ENCODE measurements at regions of chr4 and their contacts with region 1.

Region 1: DNA sequence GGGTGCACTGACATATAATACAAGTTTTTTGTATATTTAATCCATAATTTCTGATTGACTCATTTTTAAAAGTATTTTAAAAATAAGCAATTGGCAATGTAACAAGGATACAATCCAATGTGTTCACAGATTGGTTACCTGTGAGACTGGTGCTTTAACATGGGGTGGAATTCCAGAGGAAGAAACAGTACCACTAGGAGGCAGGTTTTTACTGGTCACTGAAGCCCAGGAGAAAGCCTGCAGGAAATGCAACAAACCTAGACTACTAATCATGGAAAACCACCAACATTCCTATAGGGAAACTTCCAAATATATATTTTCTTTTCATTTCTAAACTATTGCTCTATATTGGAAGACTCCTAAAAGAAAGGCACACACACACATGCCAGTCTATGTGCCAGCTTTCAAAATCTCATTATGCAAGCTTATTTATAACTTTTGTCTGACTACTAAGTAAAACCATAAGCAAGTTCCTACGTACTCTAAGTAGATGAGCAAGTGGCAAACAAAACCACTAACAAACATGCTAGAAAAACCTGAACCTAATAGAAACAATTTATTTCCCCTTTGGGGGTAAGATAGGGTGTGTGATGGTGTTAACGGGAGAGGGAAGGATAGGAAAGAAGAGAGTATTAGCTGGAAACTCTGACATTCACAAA is 19.2 kb downstream of the G3BP2 start:
- DNase-seq: no peak
- H3K4me3 ChIP-seq: no peak overlapping the region
- H3K4me3 Mint-ChIP-seq: no peak overlapping the region
- H3K27ac ChIP-seq: peak overlapping the region; percentile 18
- H3K27ac Mint-ChIP-seq: peak overlapping the region in 5 of 7 donors; percentile 61 to 93 (median 81)
- H3K4me1 ChIP-seq: peaks cover 46% of the 10 kb centered on the region
- H3K4me1 Mint-ChIP-seq: peaks cover 28 to 55% (median 35%) of the 10 kb centered on the region in 4 donors
- H3K27me3 ChIP-seq: no peaks in the 10 kb centered on the region
- H3K27me3 Mint-ChIP-seq: no peaks in the 10 kb centered on the region

Region 2: GRCh38 chr4:73864365-73864764 is 1789.6 kb before region 1 on chr4:
- CTCF ChIA-PET with region 1: no interaction called
- POLR2A ChIA-PET with region 1: no interaction called
- intact Hi-C with region 1: no loop called
- DNase-seq: no peak
- H3K4me3 ChIP-seq: no peak overlapping the region
- H3K4me3 Mint-ChIP-seq: no peak overlapping the region
- H3K27ac ChIP-seq: no peak overlapping the region
- H3K27ac Mint-ChIP-seq: no peak overlapping the region
- H3K4me1 ChIP-seq: no peaks in the 10 kb centered on the region
- H3K4me1 Mint-ChIP-seq: no peaks in the 10 kb centered on the region
- H3K27me3 ChIP-seq: no peaks in the 10 kb centered on the region
- H3K27me3 Mint-ChIP-seq: peaks cover under 1 to 7% of the 10 kb centered on the region in 2 donors

Region 3: GRCh38 chr4:75630174-75630936 is 23.6 kb before region 1 on chr4 and contains the start of gene CDKL2:
- CTCF ChIA-PET with region 1: interaction called, 5 read pairs
- POLR2A ChIA-PET with region 1: no interaction called
- intact Hi-C with region 1: loop called (anchors 2 kb)
- DNase-seq: peak; percentile 91 to 93 (median 92)
- H3K4me3 ChIP-seq: peak within 1 kb of the TSS; percentile 33 to 66
- H3K4me3 Mint-ChIP-seq: peak within 1 kb of the TSS; percentile 88 to 95 (median 92)
- H3K27ac ChIP-seq: peak within 1 kb of the TSS; percentile 29
- H3K27ac Mint-ChIP-seq: peak within 1 kb of the TSS; percentile 26 to 93 (median 89)
- H3K4me1 ChIP-seq: peaks cover 6% of the 10 kb centered on the region
- H3K4me1 Mint-ChIP-seq: peaks cover 4 to 23% (median 11%) of the 10 kb centered on the region in 4 donors
- H3K27me3 ChIP-seq: no peaks in the 10 kb centered on the region
- H3K27me3 Mint-ChIP-seq: no peaks in the 10 kb centered on the region
- total RNA-seq, gene CDKL2: 0.35 to 0.39 TPM

Region 4: GRCh38 chr4:75752637-75753036 is 98.7 kb after region 1 on chr4:
- CTCF ChIA-PET with region 1: no interaction called
- POLR2A ChIA-PET with region 1: no interaction called
- intact Hi-C with region 1: no loop called
- DNase-seq: no peak
- H3K4me3 ChIP-seq: no peak overlapping the region
- H3K4me3 Mint-ChIP-seq: no peak overlapping the region
- H3K27ac ChIP-seq: no peak overlapping the region
- H3K27ac Mint-ChIP-seq: no peak overlapping the region
- H3K4me1 ChIP-seq: no peaks in the 10 kb centered on the region
- H3K4me1 Mint-ChIP-seq: peaks cover 0 to 5% (median 0%) of the 10 kb centered on the region in 4 donors
- H3K27me3 ChIP-seq: no peaks in the 10 kb centered on the region
- H3K27me3 Mint-ChIP-seq: no peaks in the 10 kb centered on the region

Measured in CD4-positive, alpha-beta memory T cell (primary cell).